Calu3 (cell line): ENCODE measurements at regions of chr5 and their contacts with region 1.

Region 1: DNA sequence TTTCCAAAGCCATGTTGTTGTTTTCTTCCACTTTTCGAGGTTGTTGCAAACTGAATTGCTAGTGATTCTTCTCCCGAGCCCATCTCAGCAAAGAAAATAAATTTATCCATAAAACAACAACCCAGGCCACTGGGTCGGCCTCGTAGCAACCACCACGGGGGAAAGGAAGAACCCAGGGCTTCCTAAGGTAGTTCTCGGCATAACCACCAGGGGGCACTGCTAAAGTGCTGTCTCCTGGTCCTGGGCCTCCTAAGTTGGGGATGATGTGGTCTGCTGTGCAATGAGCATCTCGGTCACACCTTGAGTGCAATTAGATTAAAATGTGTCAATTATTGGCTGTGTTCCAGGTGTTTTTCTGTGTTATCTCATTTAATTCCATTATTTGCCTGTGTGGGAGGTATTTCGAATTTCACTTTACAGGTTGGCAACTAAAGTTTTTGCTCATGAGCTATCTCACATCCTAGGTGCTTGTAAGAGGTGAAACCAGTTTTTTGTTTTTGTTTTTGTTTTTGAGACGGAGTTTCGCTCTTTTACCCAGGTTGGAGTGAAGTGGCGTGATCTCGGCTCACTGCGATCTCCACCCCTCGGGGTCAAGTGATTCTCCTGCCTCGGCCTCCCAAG is 102.8 kb upstream of the DAP start:
- DNase-seq: peak; percentile 76
- H3K4me3 Mint-ChIP-seq: no peak overlapping the region
- H3K27ac Mint-ChIP-seq: no peak overlapping the region
- H3K4me1 Mint-ChIP-seq: no peaks in the 10 kb centered on the region
- H3K27me3 Mint-ChIP-seq: peaks cover 72% of the 10 kb centered on the region
- CTCF ChIP-seq: peak; percentile 85

Region 2: DNA sequence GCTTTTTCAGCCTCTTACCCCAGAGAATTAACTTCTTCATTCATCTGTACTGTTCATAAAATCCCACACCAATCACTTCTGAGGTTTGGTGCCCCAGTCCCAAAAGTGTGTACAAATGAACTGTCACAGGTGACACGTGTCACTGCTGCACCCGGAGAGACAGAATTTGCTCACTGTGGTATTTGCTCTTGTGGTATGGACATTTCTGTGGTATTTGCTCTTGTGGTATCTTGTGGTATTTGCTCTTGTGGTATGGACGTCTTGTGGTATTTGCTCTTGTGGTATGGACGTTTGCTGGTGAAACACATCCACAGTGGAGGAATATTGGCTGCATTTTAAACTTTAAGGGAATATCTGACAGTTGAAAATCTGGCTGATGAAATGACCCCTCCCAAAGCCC is 112.1 kb after region 1 on chr5:
- CTCF ChIA-PET with region 1: no interaction called
- intact Hi-C with region 1: no loop called
- DNase-seq: no peak
- H3K4me3 Mint-ChIP-seq: no peak overlapping the region
- H3K27ac Mint-ChIP-seq: no peak overlapping the region
- H3K4me1 Mint-ChIP-seq: no peaks in the 10 kb centered on the region
- H3K27me3 Mint-ChIP-seq: no peaks in the 10 kb centered on the region
- CTCF ChIP-seq: no peak

Region 3: DNA sequence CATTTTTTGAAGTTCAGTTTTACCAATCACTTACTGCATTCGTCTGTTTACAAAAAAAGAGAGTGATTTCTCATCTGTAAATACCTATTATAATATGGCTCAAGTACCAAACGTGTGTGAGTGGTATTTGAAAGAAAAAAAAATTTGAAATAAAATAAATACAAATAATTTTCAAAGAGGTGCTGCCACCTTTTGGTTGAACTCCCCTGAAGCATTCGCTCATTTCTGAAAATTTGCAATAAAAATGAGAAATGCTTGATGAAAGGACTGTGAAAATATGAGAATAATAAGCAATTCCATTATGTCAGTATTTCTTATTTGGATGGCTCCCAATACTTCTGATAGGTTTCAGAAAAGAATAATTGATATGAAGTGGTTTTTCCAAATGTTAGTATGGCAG is 630.5 kb after region 1 on chr5:
- CTCF ChIA-PET with region 1: no interaction called
- intact Hi-C with region 1: loop called (anchors 10 kb)
- DNase-seq: no peak
- H3K4me3 Mint-ChIP-seq: no peak overlapping the region
- H3K27ac Mint-ChIP-seq: no peak overlapping the region
- H3K4me1 Mint-ChIP-seq: peaks cover 11% of the 10 kb centered on the region
- H3K27me3 Mint-ChIP-seq: no peaks in the 10 kb centered on the region
- CTCF ChIP-seq: no peak

Region 4: GRCh38 chr5:12023614-12024241 is 1159.9 kb after region 1 on chr5:
- CTCF ChIA-PET with region 1: no interaction called
- intact Hi-C with region 1: loop called (anchors 10 kb)
- DNase-seq: peak; percentile 46
- H3K4me3 Mint-ChIP-seq: no peak overlapping the region
- H3K27ac Mint-ChIP-seq: no peak overlapping the region
- H3K4me1 Mint-ChIP-seq: no peaks in the 10 kb centered on the region
- H3K27me3 Mint-ChIP-seq: no peaks in the 10 kb centered on the region
- CTCF ChIP-seq: peak; percentile 51